ENCODE measurements at regions of chr1 and their contacts with region 1.

Region 1: GRCh38 chr1:150256554-150257341 is 826 bp upstream of the CA14 start:
- DNase-seq: no peak
- ATAC-seq: no peak
- H3K4me3 Mint-ChIP-seq: peak overlapping the region; percentile 63
- H3K27ac Mint-ChIP-seq: no peak overlapping the region
- H3K4me1 Mint-ChIP-seq: peaks cover 13% of the 10 kb centered on the region
- H3K27me3 Mint-ChIP-seq: peaks cover 30% of the 10 kb centered on the region
- CTCF ChIP-seq: no peak

Region 2: GRCh38 chr1:150194381-150195031 is 62.2 kb before region 1 on chr1:
- CTCF ChIA-PET with region 1: no interaction called
- POLR2A ChIA-PET with region 1: no interaction called
- intact Hi-C with region 1: no loop called
- DNase-seq: no peak
- ATAC-seq: no peak
- H3K4me3 Mint-ChIP-seq: no peak overlapping the region
- H3K27ac Mint-ChIP-seq: no peak overlapping the region
- H3K4me1 Mint-ChIP-seq: no peaks in the 10 kb centered on the region
- H3K27me3 Mint-ChIP-seq: no peaks in the 10 kb centered on the region
- CTCF ChIP-seq: no peak

Region 3: GRCh38 chr1:150213170-150214098 is 43.3 kb before region 1 on chr1:
- CTCF ChIA-PET with region 1: no interaction called
- POLR2A ChIA-PET with region 1: no interaction called
- intact Hi-C with region 1: no loop called
- DNase-seq: peak; percentile 97
- ATAC-seq: peak; percentile 99
- H3K4me3 Mint-ChIP-seq: peak overlapping the region; percentile 81
- H3K27ac Mint-ChIP-seq: peak overlapping the region; percentile 96
- H3K4me1 Mint-ChIP-seq: peaks cover 14% of the 10 kb centered on the region
- H3K27me3 Mint-ChIP-seq: no peaks in the 10 kb centered on the region
- CTCF ChIP-seq: no peak

Region 4: DNA sequence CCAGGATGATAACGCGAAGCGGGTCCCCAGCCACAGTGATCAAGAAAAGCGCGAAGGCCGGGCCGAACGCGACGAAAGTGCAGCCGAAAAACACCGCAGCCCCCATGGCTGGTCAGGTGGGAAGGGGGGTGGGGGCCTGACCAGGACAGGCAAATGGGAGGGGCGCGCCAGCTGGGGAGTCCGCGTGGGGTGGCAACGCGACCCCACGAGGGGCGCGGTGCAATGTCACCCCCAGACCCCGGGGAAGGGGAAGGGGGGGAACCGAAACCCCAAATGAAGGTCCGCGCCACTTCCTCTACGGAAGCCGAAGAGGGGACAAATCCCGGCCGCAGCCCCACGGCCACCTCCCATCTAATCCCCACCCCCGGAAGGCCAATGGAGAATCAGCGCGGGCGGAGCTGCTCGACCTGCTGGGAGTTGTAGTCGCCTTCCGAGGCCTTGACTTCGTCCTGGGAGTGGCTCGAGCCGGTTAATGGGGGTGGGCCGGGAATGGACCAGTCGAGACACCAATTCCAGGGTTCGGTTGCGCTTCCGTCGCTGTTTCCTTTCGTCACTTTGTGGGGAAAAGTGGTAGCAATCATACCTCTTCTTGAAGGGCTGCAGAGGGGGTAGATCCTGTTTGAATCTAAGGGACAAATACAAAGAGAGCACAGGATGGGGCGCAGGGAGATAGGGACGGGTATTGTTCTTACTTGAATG is 12.1 kb after region 1 on chr1 and contains the start of gene APH1A:
- CTCF ChIA-PET with region 1: interaction called, 21 read pairs
- POLR2A ChIA-PET with region 1: interaction called, 5 read pairs
- intact Hi-C with region 1: no loop called
- DNase-seq: peak; percentile 97
- ATAC-seq: peak; percentile 98
- H3K4me3 Mint-ChIP-seq: peak within 1 kb of the TSS; percentile 96
- H3K27ac Mint-ChIP-seq: peak within 1 kb of the TSS; percentile 96
- H3K4me1 Mint-ChIP-seq: peaks cover 18% of the 10 kb centered on the region
- H3K27me3 Mint-ChIP-seq: no peaks in the 10 kb centered on the region
- CTCF ChIP-seq: no peak
- total RNA-seq, gene APH1A: 83.7 to 87.4 TPM

Region 5: DNA sequence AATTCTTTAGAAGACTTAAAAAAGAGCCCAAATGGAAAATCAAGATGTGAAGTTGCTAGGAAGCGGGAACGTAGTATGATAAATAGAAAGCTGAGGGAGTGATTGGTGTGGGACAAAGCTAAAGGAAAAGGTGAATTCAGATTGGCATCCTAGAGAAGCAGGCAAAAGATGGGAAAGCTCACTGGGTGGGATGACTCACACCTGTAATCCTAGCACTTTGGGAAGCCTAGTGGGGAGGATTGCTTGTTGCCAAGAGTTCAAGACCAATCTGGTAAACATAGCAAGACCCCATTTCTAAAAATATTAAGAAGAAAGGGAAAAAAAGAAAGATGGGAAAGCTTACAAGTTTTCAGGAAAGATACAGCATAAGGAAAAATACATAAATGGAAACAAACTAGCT is 38.7 kb after region 1 on chr1:
- CTCF ChIA-PET with region 1: interaction called, 15 read pairs
- POLR2A ChIA-PET with region 1: interaction called, 3 read pairs
- intact Hi-C with region 1: no loop called
- DNase-seq: no peak
- ATAC-seq: no peak
- H3K4me3 Mint-ChIP-seq: peak overlapping the region; percentile 33
- H3K27ac Mint-ChIP-seq: peak overlapping the region; percentile 3
- H3K4me1 Mint-ChIP-seq: peaks cover 36% of the 10 kb centered on the region
- H3K27me3 Mint-ChIP-seq: no peaks in the 10 kb centered on the region
- CTCF ChIP-seq: no peak

Region 6: DNA sequence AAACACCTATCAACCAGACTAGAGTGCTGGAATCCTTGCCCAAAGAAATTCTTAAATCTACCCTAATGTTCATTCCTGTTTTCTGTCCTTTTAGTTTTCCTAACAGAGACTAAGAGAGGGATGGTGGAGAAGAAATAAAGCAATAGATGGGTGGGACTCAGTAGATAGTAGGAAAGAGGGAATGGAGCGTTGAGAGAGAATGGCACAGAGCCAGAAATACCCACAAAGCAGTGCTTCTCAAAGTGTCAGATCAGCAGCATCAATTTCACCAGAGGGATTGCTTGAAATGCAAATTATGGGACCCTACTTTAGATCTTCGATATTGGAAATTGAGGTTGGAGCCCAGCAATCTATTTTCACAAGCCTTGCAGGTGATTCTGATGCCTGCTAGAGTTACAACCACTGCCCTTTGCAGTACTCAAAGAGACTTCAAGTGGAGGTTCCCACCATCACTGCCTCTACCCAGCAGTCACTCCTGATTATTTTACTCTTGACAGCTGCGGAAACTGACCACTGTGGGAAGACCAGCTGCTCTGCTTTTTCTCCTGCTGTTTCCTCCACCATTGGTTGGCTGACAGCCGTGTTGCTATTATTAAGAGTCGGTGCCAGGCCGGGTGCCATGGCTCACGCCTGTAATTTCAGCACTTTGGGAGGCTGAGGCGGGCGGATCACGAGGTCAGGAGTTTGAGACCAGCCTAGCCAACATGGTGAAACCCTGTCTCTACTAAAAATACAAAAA is 53.2 kb after region 1 on chr1:
- CTCF ChIA-PET with region 1: no interaction called
- POLR2A ChIA-PET with region 1: no interaction called
- intact Hi-C with region 1: no loop called
- DNase-seq: no peak
- ATAC-seq: no peak
- H3K4me3 Mint-ChIP-seq: no peak overlapping the region
- H3K27ac Mint-ChIP-seq: no peak overlapping the region
- H3K4me1 Mint-ChIP-seq: peaks cover 2% of the 10 kb centered on the region
- H3K27me3 Mint-ChIP-seq: no peaks in the 10 kb centered on the region
- CTCF ChIP-seq: no peak

Region 7: DNA sequence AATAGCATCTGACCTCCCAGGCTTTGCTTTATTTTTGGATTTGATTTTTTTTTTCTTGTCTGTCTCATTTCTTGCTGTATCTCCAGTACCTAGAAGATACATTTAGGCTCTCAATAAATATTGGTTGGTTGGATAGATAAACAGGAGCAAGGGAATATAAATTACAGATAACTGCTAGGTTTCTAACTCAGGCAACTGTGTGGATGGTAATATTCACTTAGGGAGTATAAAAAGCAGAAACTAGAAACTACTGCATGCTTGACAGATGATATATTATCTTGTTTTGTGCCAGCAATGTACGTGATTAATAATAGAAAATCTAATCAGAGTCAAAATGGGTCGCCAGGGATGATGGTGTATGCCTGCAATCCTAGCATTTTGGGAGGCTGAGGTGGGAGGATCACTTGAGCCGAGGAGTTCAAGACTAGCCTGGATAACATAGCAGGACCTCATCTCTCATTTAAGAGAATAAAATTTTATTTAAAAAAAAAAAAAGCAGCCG is 199.4 kb after region 1 on chr1:
- CTCF ChIA-PET with region 1: interaction called, 12 read pairs
- POLR2A ChIA-PET with region 1: no interaction called
- intact Hi-C with region 1: no loop called
- DNase-seq: no peak
- ATAC-seq: no peak
- H3K4me3 Mint-ChIP-seq: no peak overlapping the region
- H3K27ac Mint-ChIP-seq: no peak overlapping the region
- H3K4me1 Mint-ChIP-seq: peaks cover 3% of the 10 kb centered on the region
- H3K27me3 Mint-ChIP-seq: no peaks in the 10 kb centered on the region
- CTCF ChIP-seq: no peak

Region 8: GRCh38 chr1:150535511-150536281 is 278.9 kb after region 1 on chr1:
- CTCF ChIA-PET with region 1: interaction called, 13 read pairs
- POLR2A ChIA-PET with region 1: no interaction called
- intact Hi-C with region 1: no loop called
- DNase-seq: no peak
- ATAC-seq: no peak
- H3K4me3 Mint-ChIP-seq: no peak overlapping the region
- H3K27ac Mint-ChIP-seq: no peak overlapping the region
- H3K4me1 Mint-ChIP-seq: no peaks in the 10 kb centered on the region
- H3K27me3 Mint-ChIP-seq: no peaks in the 10 kb centered on the region
- CTCF ChIP-seq: no peak